Activated T-helper 1 cell treated with anti-CD3 and anti-CD28 coated beads, Interleukin-12 subunit alpha, Interleukin-12 subunit beta, Interleukin-2, Interleukin-4 antibody, amounts not matched to agents 30 ng/mL and 10 ng/mL and 1 ng/mL, durations not matched to agents 14 hours and 24 hours and 36 hours (primary cell): ENCODE measurements at regions of chr4 and their contacts with region 1.

Region 1: DNA sequence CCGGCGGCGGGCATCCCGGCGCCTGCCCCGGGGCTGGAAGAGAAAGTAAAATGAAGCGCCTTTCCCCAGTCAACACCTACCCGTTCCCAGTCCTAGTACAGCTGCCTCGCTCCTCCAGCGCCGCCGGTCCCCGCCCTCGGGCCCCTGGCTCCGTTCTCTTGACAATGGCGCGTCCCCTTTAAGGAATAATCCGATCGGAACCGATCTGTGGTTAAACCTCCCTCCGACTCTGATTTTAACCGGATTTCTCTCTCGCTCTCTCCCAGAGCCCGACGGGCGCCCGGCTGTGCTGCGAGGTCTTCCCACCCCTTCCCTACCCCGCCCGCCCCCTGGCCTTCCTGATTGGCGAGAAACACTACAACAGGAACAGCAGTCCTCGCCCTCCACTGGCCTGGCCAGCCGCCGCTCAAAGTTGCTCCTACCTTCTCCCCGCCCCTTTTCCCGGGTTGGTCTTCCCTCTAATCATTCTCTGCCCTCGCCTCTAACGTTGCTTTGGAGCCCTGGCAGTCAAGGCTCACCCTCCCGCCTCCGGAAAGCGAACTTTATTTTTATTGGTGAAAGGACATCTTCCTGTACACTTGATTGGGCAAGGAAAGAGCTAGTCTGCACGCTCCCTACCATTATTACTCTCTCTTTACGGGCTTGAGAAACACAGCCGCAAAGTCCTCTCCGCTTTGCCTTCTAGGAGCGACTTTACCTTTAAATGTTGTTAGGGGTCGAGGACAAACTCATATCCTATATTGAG is at the start of gene FRYL:
- DNase-seq: peak; percentile 96
- H3K4me3 Mint-ChIP-seq: peak within 1 kb of the TSS; percentile 90
- H3K27ac Mint-ChIP-seq: peak within 1 kb of the TSS; percentile 90
- H3K4me1 Mint-ChIP-seq: peaks cover 46% of the 10 kb centered on the region
- H3K27me3 Mint-ChIP-seq: no peaks in the 10 kb centered on the region
- total RNA-seq, gene FRYL: 70.3 and 80.0 TPM in 2 replicates

Region 2: DNA sequence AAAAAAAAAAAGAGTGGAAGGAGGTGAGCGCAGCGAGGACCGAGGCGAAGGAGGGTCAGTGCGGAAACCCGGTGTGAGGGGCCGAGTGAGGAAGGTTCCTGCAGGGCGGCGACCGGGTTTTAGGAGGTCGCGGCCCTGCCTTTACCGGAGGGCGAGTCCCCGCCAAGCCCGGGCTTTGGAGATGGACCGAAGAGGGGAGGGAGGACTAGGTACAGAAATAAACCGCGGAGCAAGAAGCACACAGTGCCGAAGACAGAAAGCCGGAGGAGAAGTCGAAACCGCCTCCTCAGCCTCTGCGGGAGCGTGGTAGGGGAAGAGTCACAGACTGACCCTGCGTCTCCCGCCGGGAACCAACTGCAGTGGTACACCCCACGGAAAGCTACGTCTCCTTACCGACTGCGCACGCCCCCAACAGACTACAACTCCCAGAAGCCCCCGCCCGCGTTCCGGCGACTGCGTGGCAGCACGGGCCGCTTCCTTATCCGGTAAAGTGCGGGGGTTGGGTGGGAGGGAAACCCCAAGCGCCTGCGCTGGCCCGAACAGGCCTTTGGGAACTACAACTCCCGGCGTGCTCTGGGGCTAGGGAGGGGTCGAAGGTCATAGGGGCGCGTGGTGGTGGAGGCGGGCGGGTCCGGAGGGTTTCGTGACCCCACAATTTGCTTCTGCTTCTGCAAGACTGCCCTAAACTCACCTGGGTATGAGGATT is 865.8 kb before region 1 on chr4 and contains the start of gene NFXL1:
- intact Hi-C with region 1: loop called (anchors 10 kb)
- DNase-seq: peak; percentile 94
- H3K4me3 Mint-ChIP-seq: peak within 1 kb of the TSS; percentile 90
- H3K27ac Mint-ChIP-seq: peak within 1 kb of the TSS; percentile 95
- H3K4me1 Mint-ChIP-seq: peaks cover 31% of the 10 kb centered on the region
- H3K27me3 Mint-ChIP-seq: no peaks in the 10 kb centered on the region
- total RNA-seq, gene NFXL1: 13.1 and 16.5 TPM in 2 replicates

Region 3: DNA sequence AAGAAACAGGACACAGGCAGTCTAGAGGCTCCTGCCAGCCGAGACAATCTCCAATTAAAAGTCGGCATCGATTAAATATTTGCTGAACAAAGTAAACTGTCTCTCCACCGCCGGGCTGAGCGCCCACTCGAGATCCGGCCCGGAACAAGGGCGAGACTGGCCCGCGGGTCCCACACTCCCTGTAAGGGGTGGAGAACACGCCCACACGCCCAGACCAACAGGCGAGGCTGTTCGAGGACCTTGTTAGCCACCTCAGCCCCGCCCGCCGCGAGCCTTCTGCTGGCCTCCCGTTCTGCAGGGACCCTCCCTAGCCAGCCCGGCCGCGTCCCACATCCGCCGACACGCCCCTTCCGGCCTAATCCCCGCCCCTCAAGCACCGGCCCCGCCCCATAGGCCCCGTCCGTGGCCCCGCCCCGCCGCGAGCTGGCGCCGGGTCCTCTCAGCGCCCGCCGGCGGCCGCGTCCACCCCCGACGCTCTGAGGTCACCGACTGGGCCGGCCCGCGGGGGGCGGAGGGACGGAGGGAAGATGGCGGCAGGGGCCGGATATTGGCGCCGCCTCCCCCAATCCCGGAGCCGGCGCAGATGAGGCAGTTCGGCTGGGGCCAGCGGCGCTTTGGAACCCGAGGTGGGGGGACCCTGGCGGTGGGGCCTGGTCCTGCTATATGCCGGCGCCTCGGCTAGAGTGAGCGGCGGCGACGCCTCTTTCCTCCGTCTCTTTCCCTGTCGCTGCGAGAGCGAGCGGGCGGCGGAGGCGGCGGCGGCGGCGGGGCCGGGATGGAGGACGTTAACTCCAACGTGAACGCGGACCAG is 439.0 kb before region 1 on chr4 and contains the start of gene SLAIN2:
- intact Hi-C with region 1: loop called (anchors 1 kb)
- DNase-seq: peak; percentile 98
- H3K4me3 Mint-ChIP-seq: peak within 1 kb of the TSS; percentile 98
- H3K27ac Mint-ChIP-seq: peak within 1 kb of the TSS; percentile 98
- H3K4me1 Mint-ChIP-seq: peaks cover 74% of the 10 kb centered on the region
- H3K27me3 Mint-ChIP-seq: no peaks in the 10 kb centered on the region
- total RNA-seq, gene SLAIN2: 71.4 and 79.4 TPM in 2 replicates

Region 4: DNA sequence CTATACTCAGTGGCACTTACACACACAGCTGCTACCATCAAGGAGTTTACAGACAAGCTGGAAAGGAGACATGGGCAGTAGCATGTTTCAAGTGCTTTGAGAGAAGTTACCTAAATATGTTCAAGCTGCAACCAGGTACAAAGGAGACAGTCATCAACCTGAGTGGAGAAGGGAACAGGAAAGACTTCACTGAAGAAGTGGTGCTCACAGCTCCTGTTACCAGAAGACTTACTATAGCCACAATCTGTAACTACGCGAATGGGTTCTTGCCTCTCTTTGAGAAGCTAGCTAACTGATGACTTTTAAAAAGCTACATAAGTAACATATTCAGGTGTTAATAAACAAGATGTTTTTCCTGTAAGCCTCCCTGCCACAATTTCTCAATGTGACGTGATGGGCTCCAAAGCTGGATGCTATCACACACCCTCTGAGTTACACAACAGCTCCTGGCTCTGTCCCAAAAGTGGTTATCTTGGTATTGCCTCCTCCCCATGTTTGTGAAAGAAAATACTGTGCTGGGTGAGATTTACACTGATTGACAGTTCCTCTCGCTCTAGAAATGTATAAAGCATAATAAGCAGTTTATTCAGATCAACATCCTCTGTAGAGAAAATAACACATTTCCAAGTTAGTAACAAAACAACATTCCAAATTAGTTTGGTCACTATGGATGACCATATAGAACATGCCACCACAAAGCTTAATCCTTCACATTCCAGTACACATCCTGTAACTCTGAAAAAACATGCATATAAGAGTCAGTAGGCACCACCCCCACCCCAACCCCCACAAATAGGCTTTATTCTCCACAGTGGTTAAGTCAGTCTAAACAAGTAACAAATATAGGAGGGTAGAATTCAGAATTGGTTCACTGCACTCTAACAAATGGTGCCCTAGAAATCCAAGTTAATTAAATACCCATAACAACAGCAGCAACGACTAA is 81.9 kb before region 1 on chr4:
- intact Hi-C with region 1: loop called (anchors 1 kb)
- DNase-seq: no peak
- H3K4me3 Mint-ChIP-seq: no peak overlapping the region
- H3K27ac Mint-ChIP-seq: no peak overlapping the region
- H3K4me1 Mint-ChIP-seq: peaks cover 33% of the 10 kb centered on the region
- H3K27me3 Mint-ChIP-seq: no peaks in the 10 kb centered on the region

Region 5: GRCh38 chr4:48792348-48793006 is 12.3 kb after region 1 on chr4:
- intact Hi-C with region 1: loop called (anchors 1 kb)
- DNase-seq: no peak
- H3K4me3 Mint-ChIP-seq: no peak overlapping the region
- H3K27ac Mint-ChIP-seq: peak overlapping the region; percentile 75
- H3K4me1 Mint-ChIP-seq: peaks cover 9% of the 10 kb centered on the region
- H3K27me3 Mint-ChIP-seq: peaks cover 1% of the 10 kb centered on the region

Region 6: DNA sequence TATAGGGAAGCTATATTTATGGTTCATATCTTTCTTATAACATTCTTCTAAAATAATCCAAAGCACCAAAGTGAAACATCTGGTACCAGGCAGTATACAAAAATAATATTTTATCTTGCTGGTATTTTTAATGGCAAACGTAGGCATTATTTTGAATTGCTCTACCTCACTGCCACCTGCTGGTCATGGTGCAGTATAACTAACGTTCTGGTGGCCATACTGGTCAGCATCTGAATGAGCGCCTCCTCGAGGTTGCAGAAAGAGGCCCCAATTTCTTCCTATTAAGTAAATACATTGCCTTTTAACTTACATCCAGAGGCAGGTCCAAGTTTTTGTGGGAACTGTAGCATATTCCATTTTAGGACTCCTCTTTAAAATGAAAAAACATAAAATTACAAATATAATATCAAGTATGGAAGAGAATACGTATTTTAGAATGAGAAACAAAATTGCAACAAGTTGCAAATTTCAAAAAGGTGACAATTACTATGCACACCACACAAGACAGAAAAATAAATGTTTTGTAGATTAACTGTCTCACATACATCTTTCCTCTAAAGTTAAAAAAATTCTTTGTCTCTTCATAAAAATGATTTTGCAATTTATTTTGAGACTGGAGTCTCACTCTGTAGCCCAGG is 183.0 kb after region 1 on chr4:
- intact Hi-C with region 1: loop called (anchors 1 kb)
- DNase-seq: peak; percentile 54
- H3K4me3 Mint-ChIP-seq: no peak overlapping the region
- H3K27ac Mint-ChIP-seq: no peak overlapping the region
- H3K4me1 Mint-ChIP-seq: no peaks in the 10 kb centered on the region
- H3K27me3 Mint-ChIP-seq: peaks cover 4% of the 10 kb centered on the region